Sigmoid colon (tissue), 7 donors: ENCODE measurements at regions of chr9 and their contacts with region 1.

Region 1: GRCh38 chr9:88747768-88748167 is 212.8 kb downstream of the NXNL2 start:
- DNase-seq: peak; percentile 83
- H3K4me3 ChIP-seq: no peak overlapping the region
- H3K27ac ChIP-seq: peak overlapping the region; percentile 40 to 75 (median 62)
- H3K4me1 ChIP-seq: peaks cover 2 to 70% (median 66%) of the 10 kb centered on the region in 4 donors
- H3K27me3 ChIP-seq: no peaks in the 10 kb centered on the region
- CTCF ChIP-seq: no peak
- EP300 ChIP-seq: no peak
- POLR2A ChIP-seq: no peak

Region 2: GRCh38 chr9:88197781-88198340 is 549.9 kb before region 1 on chr9:
- intact Hi-C with region 1: loop called (anchors 5 kb)
- DNase-seq: no peak
- H3K4me3 ChIP-seq: peak overlapping the region in 3 of 4 donors; percentile 31 to 40 (median 36)
- H3K27ac ChIP-seq: peak overlapping the region; percentile 64 to 82 (median 76)
- H3K4me1 ChIP-seq: peaks cover 0 to 37% (median 32%) of the 10 kb centered on the region in 4 donors
- H3K27me3 ChIP-seq: no peaks in the 10 kb centered on the region
- CTCF ChIP-seq: no peak
- EP300 ChIP-seq: peak in 3 of 4 donors; percentile 59 to 79 (median 73)
- POLR2A ChIP-seq: no peak

Region 3: DNA sequence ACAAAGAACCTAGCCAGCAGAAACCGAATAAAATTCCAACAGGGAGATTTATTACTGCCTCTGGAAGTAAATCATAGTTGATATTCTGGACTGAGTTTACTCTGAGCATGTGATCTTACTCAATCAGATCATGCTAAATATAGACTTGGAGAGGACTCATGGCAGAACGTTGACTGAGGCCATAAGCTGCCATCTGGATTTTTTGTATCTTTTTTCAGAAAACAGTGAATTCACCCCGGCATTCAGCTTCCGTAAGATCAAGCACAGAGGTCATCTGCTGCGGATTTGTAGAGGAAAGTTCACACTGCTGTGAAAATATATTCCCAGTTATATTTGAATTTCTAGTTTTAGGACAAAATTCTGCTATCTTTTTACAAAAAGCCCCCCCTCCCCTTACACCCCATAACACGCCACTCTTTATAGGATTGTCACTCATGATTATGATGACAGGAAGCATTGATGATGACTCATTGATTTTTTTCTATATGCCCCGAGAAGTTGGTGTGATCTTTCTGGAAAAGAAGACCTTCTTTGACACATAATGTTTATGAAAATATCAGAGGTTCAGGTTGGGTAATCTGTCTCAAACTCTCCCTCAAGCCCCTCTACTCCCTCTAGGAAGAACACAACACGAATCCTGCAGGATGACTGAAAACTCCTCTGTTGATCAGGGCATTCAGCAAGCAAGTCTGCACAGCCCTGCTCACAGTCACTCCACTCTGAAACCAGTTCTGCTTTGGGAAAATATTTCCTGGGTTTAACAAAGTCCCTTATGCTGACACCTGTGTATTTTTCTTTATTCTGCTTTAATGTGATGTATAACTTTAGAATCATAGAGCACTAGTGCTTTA is 142.0 kb before region 1 on chr9:
- intact Hi-C with region 1: loop called (anchors 5 kb)
- DNase-seq: no peak
- H3K4me3 ChIP-seq: no peak overlapping the region
- H3K27ac ChIP-seq: peak overlapping the region; percentile 49 to 86 (median 72)
- H3K4me1 ChIP-seq: peaks cover 0 to 22% (median 20%) of the 10 kb centered on the region in 4 donors
- H3K27me3 ChIP-seq: no peaks in the 10 kb centered on the region
- CTCF ChIP-seq: no peak
- EP300 ChIP-seq: peak in 1 of 4 donors; percentile 25
- POLR2A ChIP-seq: no peak

Region 4: GRCh38 chr9:88651682-88652633 is 95.8 kb before region 1 on chr9:
- intact Hi-C with region 1: loop called (anchors 5 kb)
- DNase-seq: peak; percentile 96
- H3K4me3 ChIP-seq: no peak overlapping the region
- H3K27ac ChIP-seq: peak overlapping the region; percentile 58 to 68 (median 64)
- H3K4me1 ChIP-seq: peaks cover 0 to 20% (median 12%) of the 10 kb centered on the region in 4 donors
- H3K27me3 ChIP-seq: no peaks in the 10 kb centered on the region
- CTCF ChIP-seq: no peak
- EP300 ChIP-seq: no peak
- POLR2A ChIP-seq: no peak

Region 5: GRCh38 chr9:88949425-88949824 is 201.7 kb after region 1 on chr9:
- intact Hi-C with region 1: loop called (anchors 5 kb)
- DNase-seq: peak; percentile 78
- H3K4me3 ChIP-seq: no peak overlapping the region
- H3K27ac ChIP-seq: peak overlapping the region; percentile 24 to 79 (median 77)
- H3K4me1 ChIP-seq: peaks cover 0 to 55% (median 48%) of the 10 kb centered on the region in 4 donors
- H3K27me3 ChIP-seq: no peaks in the 10 kb centered on the region
- CTCF ChIP-seq: no peak
- EP300 ChIP-seq: peak in 2 of 4 donors; percentile 51 to 76
- POLR2A ChIP-seq: no peak

Region 6: DNA sequence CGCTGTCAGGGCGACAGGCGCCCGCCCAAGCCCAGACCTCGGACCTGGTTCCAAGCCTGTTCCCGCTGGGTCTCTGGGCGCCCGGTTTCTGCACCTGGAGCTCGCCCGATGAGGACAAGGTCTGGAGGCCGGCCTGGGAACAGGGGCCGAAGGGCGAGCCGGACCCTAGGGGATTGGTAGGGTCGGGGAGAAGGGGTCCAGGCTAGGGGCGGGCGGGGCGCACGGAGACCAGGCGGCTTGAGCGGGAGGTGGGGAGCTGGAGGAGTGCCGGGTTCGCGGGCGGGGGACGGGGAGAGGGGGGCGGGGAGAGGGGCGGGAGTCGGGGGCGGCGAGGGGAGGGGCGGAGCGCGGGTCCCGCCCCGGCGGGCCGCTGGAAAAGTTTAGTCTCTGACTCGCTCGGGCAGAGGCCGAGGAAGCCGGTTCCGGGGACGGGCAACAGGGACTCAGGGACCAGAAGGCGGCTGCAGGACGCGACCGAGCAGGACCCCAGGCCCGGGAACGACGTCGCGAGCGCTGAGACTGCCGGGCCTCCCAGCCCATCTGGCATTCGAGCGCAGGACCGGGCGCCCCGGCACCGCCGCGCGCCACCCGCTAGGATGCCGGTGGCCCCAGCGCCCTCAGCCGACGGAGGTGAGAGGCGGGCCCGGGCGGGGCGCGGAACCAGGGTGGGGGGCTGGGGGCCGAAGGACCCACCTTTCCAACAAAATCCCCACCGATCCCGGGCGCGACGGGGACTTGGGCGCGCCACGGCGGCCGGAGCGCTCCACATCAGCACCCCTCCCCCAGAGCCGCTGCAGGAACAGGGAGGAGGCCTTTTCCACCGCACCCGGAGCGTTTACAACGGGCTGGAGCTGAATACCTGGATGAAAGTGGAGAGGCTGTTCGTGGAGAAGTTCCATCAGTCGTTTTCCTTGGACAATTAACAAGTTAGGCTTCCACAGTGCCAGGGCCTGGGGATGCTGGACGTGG is 243.6 kb after region 1 on chr9 and contains the start of gene S1PR3:
- intact Hi-C with region 1: loop called (anchors 2 kb)
- DNase-seq: peak; percentile 83
- H3K4me3 ChIP-seq: peak within 1 kb of the TSS; percentile 57 to 85 (median 74)
- H3K27ac ChIP-seq: peak within 1 kb of the TSS; percentile 76 to 98 (median 84)
- H3K4me1 ChIP-seq: peaks cover 0 to 59% (median 43%) of the 10 kb centered on the region in 4 donors
- H3K27me3 ChIP-seq: no peaks in the 10 kb centered on the region
- CTCF ChIP-seq: peak in 2 of 4 experiments; percentile 1 to 5
- EP300 ChIP-seq: no peak
- POLR2A ChIP-seq: no peak
- total RNA-seq, gene S1PR3: 10.4 to 33.0 (median 16.8) TPM